HepG2 (cell line): ENCODE measurements at regions of chr20 and their contacts with region 1.

Region 1: GRCh38 chr20:38748097-38748860 is at the start of gene ACTR5:
- DNase-seq: peak; percentile 86
- ATAC-seq: peak; percentile 92
- H3K4me3 ChIP-seq: peak within 1 kb of the TSS; percentile 65 to 96 (median 95)
- H3K27ac ChIP-seq: peak within 1 kb of the TSS; percentile 75
- H3K4me1 ChIP-seq: peaks cover 23% of the 10 kb centered on the region
- H3K27me3 ChIP-seq: peaks cover 0 to 10% of the 10 kb centered on the region in 2 experiments; a peak in 3 of 5 replicates
- CTCF ChIP-seq: peak; percentile 24; the same call in 1 of the 2 replicates
- EP300 ChIP-seq: no peak
- POLR2A ChIP-seq: peak; percentile 88 to 99
- RAD21 ChIP-seq: peak; percentile 78; the same call in 1 of the 2 replicates
- total RNA-seq, gene ACTR5: 20.5 and 22.0 TPM in 2 replicates

Region 2: GRCh38 chr20:37192137-37192854 is 1556.0 kb before region 1 on chr20:
- CTCF ChIA-PET with region 1: no interaction called
- POLR2A ChIA-PET with region 1: no interaction called
- in situ Hi-C with region 1: no loop called
- intact Hi-C with region 1: no loop called
- DNase-seq: peak; percentile 80
- ATAC-seq: peak; percentile 89
- H3K4me3 ChIP-seq: no peak overlapping the region
- H3K27ac ChIP-seq: no peak overlapping the region
- H3K4me1 ChIP-seq: peaks cover 30% of the 10 kb centered on the region
- H3K27me3 ChIP-seq: no peaks in the 10 kb centered on the region
- CTCF ChIP-seq: peak; percentile 96
- EP300 ChIP-seq: no peak
- POLR2A ChIP-seq: peak in 1 of 2 experiments; percentile 30; a peak in 1 of 4 replicates
- RAD21 ChIP-seq: no peak; the same call in 1 of the 2 replicates

Region 3: GRCh38 chr20:38446441-38447209 is 301.7 kb before region 1 on chr20:
- CTCF ChIA-PET with region 1: no interaction called
- POLR2A ChIA-PET with region 1: no interaction called
- in situ Hi-C with region 1: loop called (anchors 25 kb)
- intact Hi-C with region 1: no loop called
- DNase-seq: peak; percentile 90
- ATAC-seq: peak; percentile 82
- H3K4me3 ChIP-seq: peak overlapping the region; percentile 86 to 99 (median 95)
- H3K27ac ChIP-seq: peak overlapping the region; percentile 78
- H3K4me1 ChIP-seq: peaks cover 42% of the 10 kb centered on the region
- H3K27me3 ChIP-seq: no peaks in the 10 kb centered on the region; a peak in 1 of 5 replicates
- CTCF ChIP-seq: peak; percentile 99
- EP300 ChIP-seq: peak; percentile 45 to 68; a peak in 3 of 4 replicates
- POLR2A ChIP-seq: peak; percentile 94 to 98
- RAD21 ChIP-seq: peak; percentile 94

Region 4: GRCh38 chr20:38645980-38646858 is 102.1 kb before region 1 on chr20:
- CTCF ChIA-PET with region 1: interaction called, 56 read pairs
- POLR2A ChIA-PET with region 1: interaction called, 3 read pairs
- in situ Hi-C with region 1: no loop called
- intact Hi-C with region 1: loop called (anchors 1 kb)
- DNase-seq: peak; percentile 71
- ATAC-seq: peak; percentile 87
- H3K4me3 ChIP-seq: peak overlapping the region in 1 of 3 experiments; percentile 42; a peak in 1 of 6 replicates
- H3K27ac ChIP-seq: no peak overlapping the region
- H3K4me1 ChIP-seq: peaks cover 25% of the 10 kb centered on the region
- H3K27me3 ChIP-seq: peaks cover 2 to 17% of the 10 kb centered on the region in 2 experiments; a peak in 3 of 5 replicates
- CTCF ChIP-seq: peak; percentile 100
- EP300 ChIP-seq: peak in 1 of 2 experiments; percentile 64; a peak in 1 of 4 replicates
- POLR2A ChIP-seq: no peak
- RAD21 ChIP-seq: peak; percentile 99

Region 5: GRCh38 chr20:38665094-38665865 is 83.0 kb before region 1 on chr20:
- CTCF ChIA-PET with region 1: no interaction called
- POLR2A ChIA-PET with region 1: no interaction called
- in situ Hi-C with region 1: no loop called
- intact Hi-C with region 1: loop called (anchors 5 kb)
- DNase-seq: peak; percentile 29
- ATAC-seq: peak; percentile 12
- H3K4me3 ChIP-seq: no peak overlapping the region
- H3K27ac ChIP-seq: no peak overlapping the region
- H3K4me1 ChIP-seq: peaks cover 52% of the 10 kb centered on the region
- H3K27me3 ChIP-seq: no peaks in the 10 kb centered on the region; a peak in 1 of 5 replicates
- CTCF ChIP-seq: no peak
- EP300 ChIP-seq: no peak
- POLR2A ChIP-seq: no peak
- RAD21 ChIP-seq: no peak

Region 6: GRCh38 chr20:38730989-38731737 is 17.1 kb before region 1 on chr20:
- CTCF ChIA-PET with region 1: interaction called, 24 read pairs
- POLR2A ChIA-PET with region 1: interaction called, 7 read pairs
- in situ Hi-C with region 1: no loop called
- intact Hi-C with region 1: loop called (anchors 1 kb)
- DNase-seq: peak; percentile 62
- ATAC-seq: peak; percentile 85
- H3K4me3 ChIP-seq: peak overlapping the region; percentile 10 to 71 (median 33)
- H3K27ac ChIP-seq: no peak overlapping the region
- H3K4me1 ChIP-seq: peaks cover 15% of the 10 kb centered on the region
- H3K27me3 ChIP-seq: peaks cover 35 to 82% of the 10 kb centered on the region in 2 experiments
- CTCF ChIP-seq: peak; percentile 99
- EP300 ChIP-seq: 0 out of 4 replicates have a peak, but pooled peaks of 1 of the 2 experiments have one; percentile 30
- POLR2A ChIP-seq: no peak
- RAD21 ChIP-seq: peak; percentile 82

Region 7: DNA sequence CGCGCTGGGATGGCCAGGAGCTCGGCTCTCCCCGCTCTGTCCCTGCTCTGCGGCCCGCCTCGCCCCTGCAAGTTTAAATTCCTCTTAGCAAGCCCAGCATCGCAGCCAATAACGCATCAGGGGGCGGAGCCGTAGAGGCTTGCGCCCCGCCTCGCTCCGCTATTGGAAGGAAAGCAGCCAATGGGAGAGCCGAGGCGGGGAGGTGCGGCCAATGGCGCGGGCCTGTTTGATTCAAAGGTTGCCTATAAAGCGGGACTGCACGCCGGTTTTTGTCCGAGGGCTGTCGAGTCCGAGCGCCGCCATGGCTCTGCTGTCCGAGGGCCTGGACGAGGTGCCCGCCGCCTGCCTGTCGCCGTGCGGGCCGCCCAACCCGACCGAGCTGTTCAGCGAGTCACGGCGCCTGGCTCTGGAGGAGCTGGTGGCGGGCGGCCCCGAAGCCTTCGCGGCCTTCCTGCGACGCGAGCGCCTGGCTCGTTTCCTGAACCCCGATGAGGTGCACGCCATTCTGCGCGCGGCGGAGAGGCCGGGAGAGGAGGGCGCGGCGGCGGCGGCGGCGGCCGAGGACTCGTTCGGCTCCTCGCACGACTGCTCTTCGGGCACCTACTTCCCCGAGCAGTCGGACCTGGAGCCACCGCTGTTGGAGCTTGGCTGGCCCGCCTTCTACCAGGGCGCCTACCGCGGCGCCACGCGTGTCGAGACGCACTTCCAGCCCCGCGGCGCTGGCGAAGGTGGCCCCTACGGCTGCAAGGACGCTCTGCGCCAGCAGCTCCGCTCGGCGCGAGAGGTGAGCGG is 178.1 kb after region 1 on chr20 and contains the start of gene FAM83D:
- CTCF ChIA-PET with region 1: no interaction called
- POLR2A ChIA-PET with region 1: no interaction called
- in situ Hi-C with region 1: no loop called
- intact Hi-C with region 1: loop called (anchors 1 kb)
- DNase-seq: peak; percentile 99
- ATAC-seq: peak; percentile 93
- H3K4me3 ChIP-seq: peak within 1 kb of the TSS; percentile 85 to 99 (median 95)
- H3K27ac ChIP-seq: peak within 1 kb of the TSS; percentile 73
- H3K4me1 ChIP-seq: peaks cover 57% of the 10 kb centered on the region
- H3K27me3 ChIP-seq: peaks cover 0 to 8% of the 10 kb centered on the region in 2 experiments; a peak in 2 of 5 replicates
- CTCF ChIP-seq: no peak
- EP300 ChIP-seq: peak in 1 of 2 experiments; percentile 40; a peak in 2 of 4 replicates
- POLR2A ChIP-seq: peak; percentile 100
- RAD21 ChIP-seq: peak; percentile 99
- total RNA-seq, gene FAM83D: 64.0 and 76.5 TPM in 2 replicates